ENCODE measurements at regions of chr10 and their contacts with region 1.

Region 1: GRCh38 chr10:103244663-103245271 is 920 bp upstream of the RPEL1 start:
- DNase-seq: peak; percentile 63
- ATAC-seq: peak; percentile 79 to 84
- H3K4me3 ChIP-seq: no peak overlapping the region
- H3K27ac ChIP-seq: no peak overlapping the region
- H3K4me1 ChIP-seq: peaks cover 26% of the 10 kb centered on the region
- H3K27me3 ChIP-seq: no peaks in the 10 kb centered on the region
- CTCF ChIP-seq: peak; percentile 93

Region 2: DNA sequence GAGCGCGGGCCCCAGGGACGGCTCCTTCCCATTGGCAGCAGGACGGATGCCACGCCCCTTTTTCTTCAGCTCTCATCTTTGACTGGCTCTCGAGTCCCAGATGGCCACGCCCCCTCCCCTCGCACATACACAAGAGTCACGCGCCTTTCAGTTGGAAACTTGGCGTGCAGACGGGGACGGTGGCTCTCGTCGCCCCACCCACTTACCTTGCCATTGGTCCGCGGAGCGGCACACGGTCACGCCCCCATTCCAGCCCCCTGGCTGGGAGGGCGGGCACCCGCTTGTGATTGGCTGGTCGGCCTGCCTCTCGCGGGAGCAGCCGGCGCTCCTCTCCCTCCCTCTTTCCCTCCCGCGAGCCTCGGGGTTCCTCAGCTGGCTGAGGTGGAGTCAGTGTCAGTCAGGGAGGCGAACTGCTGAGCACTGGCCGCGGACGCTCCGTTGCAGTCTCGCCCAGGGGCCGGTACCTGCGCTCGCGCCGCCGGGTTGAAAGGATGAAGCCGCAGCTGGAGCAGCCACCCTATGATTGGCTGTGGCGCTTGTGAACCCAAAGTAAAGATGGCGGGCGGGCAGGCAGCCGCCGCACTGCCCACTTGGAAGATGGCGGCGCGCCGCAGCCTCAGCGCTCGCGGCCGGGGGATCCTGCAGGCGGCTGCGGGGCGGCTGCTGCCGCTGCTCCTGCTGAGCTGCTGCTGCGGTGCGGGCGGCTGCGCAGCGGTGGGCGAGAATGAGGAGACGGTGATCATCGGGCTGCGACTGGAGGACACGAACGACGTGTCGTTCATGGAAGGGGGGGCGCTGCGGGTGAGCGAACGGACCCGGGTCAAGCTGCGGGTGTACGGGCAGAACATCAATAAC is 326.6 kb before region 1 on chr10 and contains the start of gene CNNM2:
- intact Hi-C with region 1: loop called (anchors 10 kb)
- DNase-seq: peak; percentile 100
- ATAC-seq: peak; percentile 98 to 99
- H3K4me3 ChIP-seq: peak within 1 kb of the TSS; percentile 98
- H3K27ac ChIP-seq: peak within 1 kb of the TSS; percentile 84
- H3K4me1 ChIP-seq: peaks cover 45% of the 10 kb centered on the region
- H3K27me3 ChIP-seq: peaks cover 4% of the 10 kb centered on the region
- CTCF ChIP-seq: no peak
- total RNA-seq, gene CNNM2: 12.1 TPM

Region 3: GRCh38 chr10:103139803-103140202 is 105.0 kb before region 1 on chr10:
- intact Hi-C with region 1: no loop called
- DNase-seq: no peak
- ATAC-seq: no peak
- H3K4me3 ChIP-seq: no peak overlapping the region
- H3K27ac ChIP-seq: no peak overlapping the region
- H3K4me1 ChIP-seq: peaks cover 8% of the 10 kb centered on the region
- H3K27me3 ChIP-seq: no peaks in the 10 kb centered on the region
- CTCF ChIP-seq: no peak

Region 4: GRCh38 chr10:103192451-103193106 is 52.2 kb before region 1 on chr10:
- intact Hi-C with region 1: no loop called
- DNase-seq: peak; percentile 92
- ATAC-seq: peak; percentile 82
- H3K4me3 ChIP-seq: peak overlapping the region; percentile 79
- H3K27ac ChIP-seq: peak overlapping the region; percentile 98
- H3K4me1 ChIP-seq: peaks cover 68% of the 10 kb centered on the region
- H3K27me3 ChIP-seq: no peaks in the 10 kb centered on the region
- CTCF ChIP-seq: no peak